ENCODE measurements at regions of chr1 and their contacts with region 1.

Region 1: DNA sequence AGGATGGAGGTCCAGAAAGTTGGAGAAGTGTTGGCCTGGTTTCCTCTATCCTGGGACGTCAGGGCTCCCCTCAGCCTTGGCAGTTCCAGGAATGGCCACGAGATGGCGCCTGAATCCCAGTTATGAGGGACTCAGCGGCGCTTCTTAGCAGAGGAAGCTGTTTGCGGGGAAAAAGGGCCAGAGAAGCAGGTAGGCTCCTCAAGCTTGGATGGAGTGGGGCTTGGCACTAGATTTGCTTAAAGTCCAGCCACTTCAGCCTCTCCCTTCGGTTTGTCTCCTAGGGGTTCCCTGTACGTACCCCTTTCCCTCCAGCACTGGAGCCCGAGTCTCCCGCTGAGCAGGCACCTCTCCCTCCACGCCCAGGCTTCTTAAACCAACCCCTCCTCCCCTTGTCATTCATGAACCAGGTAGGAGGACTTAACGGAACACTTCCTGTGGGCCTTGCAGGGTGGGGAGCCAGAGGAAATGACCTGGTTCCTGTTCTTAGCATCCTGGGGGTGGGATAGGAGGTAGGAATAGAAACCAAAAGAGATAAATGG is 32.0 kb upstream of the TENT5B start:
- DNase-seq: peak; percentile 93
- H3K4me3 Mint-ChIP-seq: peak overlapping the region; percentile 64
- H3K27ac Mint-ChIP-seq: peak overlapping the region; percentile 42
- H3K4me1 Mint-ChIP-seq: peaks cover 19% of the 10 kb centered on the region
- H3K27me3 Mint-ChIP-seq: no peaks in the 10 kb centered on the region

Region 2: GRCh38 chr1:26664802-26665201 is 379.9 kb before region 1 on chr1:
- CTCF ChIA-PET with region 1: no interaction called
- POLR2A ChIA-PET with region 1: no interaction called
- intact Hi-C with region 1: no loop called
- DNase-seq: no peak
- H3K4me3 Mint-ChIP-seq: no peak overlapping the region
- H3K27ac Mint-ChIP-seq: no peak overlapping the region
- H3K4me1 Mint-ChIP-seq: peaks cover 11% of the 10 kb centered on the region
- H3K27me3 Mint-ChIP-seq: no peaks in the 10 kb centered on the region

Region 3: DNA sequence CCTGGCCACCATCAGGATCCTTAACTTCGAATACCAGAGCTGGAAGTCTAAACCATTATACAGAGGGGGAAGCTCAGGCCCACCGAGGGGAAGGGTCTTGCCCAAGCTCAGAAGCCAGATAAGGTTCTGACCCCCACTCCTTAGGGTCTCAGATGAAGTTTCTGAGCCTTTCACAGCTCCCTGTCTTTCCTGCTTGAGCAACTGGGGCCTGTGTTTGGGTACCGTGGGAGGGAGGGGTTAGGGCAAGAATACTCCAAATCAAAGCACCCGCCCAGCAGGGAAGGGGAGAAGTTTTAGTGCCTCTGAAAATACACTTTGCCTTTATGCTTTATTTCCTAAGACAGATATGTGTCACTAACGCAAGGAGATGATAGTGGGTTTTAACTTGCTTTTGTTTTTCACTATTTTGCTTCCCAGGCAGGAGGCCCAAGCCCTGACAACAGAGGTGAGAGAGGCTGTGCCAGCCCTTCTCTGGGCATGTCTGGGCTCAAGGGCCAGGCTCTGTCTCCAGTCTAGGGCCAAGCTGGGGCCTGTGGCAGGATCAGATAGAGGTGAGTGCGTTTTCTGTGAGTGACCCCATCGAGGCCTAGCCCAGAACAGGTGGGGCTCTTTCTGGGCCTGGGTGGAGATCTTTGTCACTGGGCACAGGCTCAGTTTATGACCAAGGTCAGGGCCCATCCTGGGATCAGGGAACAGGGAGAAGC is 11.5 kb before region 1 on chr1:
- CTCF ChIA-PET with region 1: interaction called, 24 read pairs
- POLR2A ChIA-PET with region 1: no interaction called
- intact Hi-C with region 1: no loop called
- DNase-seq: no peak
- H3K4me3 Mint-ChIP-seq: no peak overlapping the region
- H3K27ac Mint-ChIP-seq: no peak overlapping the region
- H3K4me1 Mint-ChIP-seq: no peaks in the 10 kb centered on the region
- H3K27me3 Mint-ChIP-seq: no peaks in the 10 kb centered on the region

Region 4: DNA sequence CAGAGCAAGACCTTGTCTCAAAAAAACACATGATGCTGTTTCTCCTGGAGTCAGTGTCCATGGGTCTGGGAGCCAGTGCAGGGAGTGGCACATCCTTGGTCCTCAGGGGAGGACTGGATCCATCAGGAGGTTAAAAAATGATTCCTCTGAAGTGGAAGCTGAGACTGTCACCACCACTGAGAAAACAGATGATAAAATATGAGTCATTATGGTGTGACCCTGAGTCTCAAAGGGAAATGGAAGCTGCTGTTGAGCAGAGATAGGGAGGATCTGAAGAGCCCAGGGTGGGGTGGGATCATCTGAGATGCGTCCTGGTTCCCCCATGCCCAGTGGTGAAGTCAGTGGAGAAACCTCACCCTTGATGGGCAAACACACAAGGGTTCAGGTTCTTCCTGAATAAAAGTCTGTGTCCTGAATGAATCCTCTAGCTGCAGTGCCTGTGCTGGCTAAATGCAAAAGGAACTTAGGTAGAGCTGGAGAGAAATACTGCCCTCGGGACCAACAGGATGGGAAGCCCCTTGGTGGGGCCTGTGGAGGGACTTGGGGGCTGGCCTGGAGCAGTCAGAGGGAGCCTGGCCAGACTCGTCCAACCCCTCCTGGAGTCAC is 29.6 kb after region 1 on chr1:
- CTCF ChIA-PET with region 1: interaction called, 29 read pairs
- POLR2A ChIA-PET with region 1: no interaction called
- intact Hi-C with region 1: no loop called
- DNase-seq: no peak
- H3K4me3 Mint-ChIP-seq: no peak overlapping the region
- H3K27ac Mint-ChIP-seq: no peak overlapping the region
- H3K4me1 Mint-ChIP-seq: no peaks in the 10 kb centered on the region
- H3K27me3 Mint-ChIP-seq: peaks cover 2% of the 10 kb centered on the region

Region 5: DNA sequence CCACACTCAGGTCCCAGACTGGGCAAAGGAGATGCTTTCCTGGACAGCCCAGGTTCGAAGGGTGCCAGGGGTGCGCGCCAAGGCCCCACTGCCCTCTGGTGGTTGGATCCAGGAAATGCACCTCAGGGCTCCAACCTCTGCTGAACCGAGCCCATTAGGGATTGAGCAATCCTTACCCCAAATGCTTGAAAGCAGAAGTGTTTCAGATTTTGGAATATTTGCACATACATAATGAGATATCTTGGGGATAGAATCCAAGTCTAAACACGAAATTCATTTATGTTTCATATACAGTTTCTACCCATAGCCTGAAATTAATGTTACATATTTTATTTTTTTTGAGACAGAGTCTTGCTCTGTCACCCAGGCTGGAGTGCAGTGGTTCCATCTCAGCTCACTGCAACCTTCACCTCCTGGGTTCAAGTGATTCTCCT is 52.8 kb after region 1 on chr1:
- CTCF ChIA-PET with region 1: interaction called, 366 read pairs
- POLR2A ChIA-PET with region 1: interaction called, 5 read pairs
- intact Hi-C with region 1: loop called (anchors 1 kb)
- DNase-seq: peak; percentile 85
- H3K4me3 Mint-ChIP-seq: no peak overlapping the region
- H3K27ac Mint-ChIP-seq: no peak overlapping the region
- H3K4me1 Mint-ChIP-seq: peaks cover 7% of the 10 kb centered on the region
- H3K27me3 Mint-ChIP-seq: no peaks in the 10 kb centered on the region

Region 6: DNA sequence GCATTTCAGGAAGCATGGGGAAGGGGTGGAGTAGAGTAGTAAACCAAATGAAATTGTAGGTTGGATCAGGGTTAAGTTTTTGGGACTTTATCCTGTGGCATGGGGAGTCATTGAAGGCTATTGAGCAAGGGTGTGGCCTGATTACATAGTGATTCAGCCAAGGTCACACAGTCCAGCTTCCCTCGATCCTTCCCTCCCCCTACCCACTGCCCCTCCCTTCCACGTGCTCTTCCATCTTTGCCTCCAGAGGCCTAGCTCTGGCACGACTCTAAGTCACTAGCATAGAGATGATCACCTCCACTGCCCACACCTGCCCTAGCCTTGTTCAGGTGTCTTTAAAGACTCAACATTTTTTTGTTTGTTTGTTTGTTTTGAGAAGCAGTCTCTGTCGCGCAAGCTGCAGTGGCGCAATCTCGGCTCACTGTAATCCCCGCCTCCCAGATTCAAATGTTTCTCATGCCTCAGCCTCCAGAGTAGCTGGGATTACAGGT is 147.4 kb after region 1 on chr1:
- CTCF ChIA-PET with region 1: interaction called, 13 read pairs
- POLR2A ChIA-PET with region 1: no interaction called
- intact Hi-C with region 1: no loop called
- DNase-seq: no peak
- H3K4me3 Mint-ChIP-seq: no peak overlapping the region
- H3K27ac Mint-ChIP-seq: no peak overlapping the region
- H3K4me1 Mint-ChIP-seq: no peaks in the 10 kb centered on the region
- H3K27me3 Mint-ChIP-seq: no peaks in the 10 kb centered on the region

Region 7: GRCh38 chr1:27284425-27285273 is 240.0 kb after region 1 on chr1:
- CTCF ChIA-PET with region 1: interaction called, 33 read pairs
- POLR2A ChIA-PET with region 1: no interaction called
- intact Hi-C with region 1: loop called (anchors 5 kb)
- DNase-seq: peak; percentile 90
- H3K4me3 Mint-ChIP-seq: no peak overlapping the region
- H3K27ac Mint-ChIP-seq: no peak overlapping the region
- H3K4me1 Mint-ChIP-seq: no peaks in the 10 kb centered on the region
- H3K27me3 Mint-ChIP-seq: no peaks in the 10 kb centered on the region

Measured in activated CD4-positive, alpha-beta memory T cell treated with anti-CD3 and anti-CD28 coated beads for 36 hours (primary cell).